Ovary (tissue), 10 donors: ENCODE measurements at regions of chr16 and their contacts with region 1.

Region 1: DNA sequence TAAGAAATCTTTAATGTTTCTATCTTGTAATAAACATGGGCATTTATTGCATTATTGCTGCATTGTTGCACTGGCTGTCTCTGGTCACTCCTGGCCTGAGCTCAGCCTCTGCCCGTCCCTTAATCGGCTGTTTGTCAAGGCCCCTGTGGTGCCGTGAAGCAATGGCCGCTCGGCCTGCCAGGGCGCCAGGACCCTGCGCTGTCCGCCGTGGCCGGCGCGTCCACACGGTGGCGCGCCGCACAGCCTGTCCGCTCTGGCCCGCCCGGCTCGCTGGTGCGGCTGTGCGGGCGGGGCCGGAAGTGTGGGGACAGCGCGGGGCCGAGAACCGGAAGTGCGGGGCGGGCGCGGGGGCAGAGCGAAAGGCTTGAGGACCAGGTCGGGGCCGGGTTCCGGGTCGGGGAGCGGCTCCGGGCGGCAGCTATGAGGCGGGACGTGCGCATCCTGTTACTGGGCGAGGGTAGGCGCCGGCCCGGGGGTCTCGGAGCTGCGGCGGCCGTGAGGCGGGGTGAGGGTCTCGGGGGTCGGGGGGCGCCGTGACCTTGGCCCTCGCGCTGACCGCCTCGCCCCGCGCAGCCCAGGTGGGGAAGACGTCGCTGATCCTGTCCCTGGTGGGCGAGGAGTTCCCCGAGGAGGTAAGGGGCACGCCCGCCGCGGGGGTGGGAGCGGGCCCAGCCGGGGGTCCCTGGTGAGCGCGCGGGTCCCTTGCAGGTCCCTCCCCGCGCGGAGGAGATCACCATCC is at the start of gene RHOT2:
- DNase-seq: peak; percentile 91 to 96 (median 94)
- H3K4me3 ChIP-seq: peak within 1 kb of the TSS; percentile 74
- H3K27ac ChIP-seq: peak within 1 kb of the TSS; percentile 58 to 67
- H3K4me1 ChIP-seq: peaks cover 12% of the 10 kb centered on the region
- H3K27me3 ChIP-seq: no peaks in the 10 kb centered on the region
- CTCF ChIP-seq: peak; percentile 93 to 97 (median 97)
- EP300 ChIP-seq: no peak
- POLR2A ChIP-seq: peak; percentile 60
- total RNA-seq, gene RHOT2: 44.6 to 100 (median 80.6) TPM

Region 2: DNA sequence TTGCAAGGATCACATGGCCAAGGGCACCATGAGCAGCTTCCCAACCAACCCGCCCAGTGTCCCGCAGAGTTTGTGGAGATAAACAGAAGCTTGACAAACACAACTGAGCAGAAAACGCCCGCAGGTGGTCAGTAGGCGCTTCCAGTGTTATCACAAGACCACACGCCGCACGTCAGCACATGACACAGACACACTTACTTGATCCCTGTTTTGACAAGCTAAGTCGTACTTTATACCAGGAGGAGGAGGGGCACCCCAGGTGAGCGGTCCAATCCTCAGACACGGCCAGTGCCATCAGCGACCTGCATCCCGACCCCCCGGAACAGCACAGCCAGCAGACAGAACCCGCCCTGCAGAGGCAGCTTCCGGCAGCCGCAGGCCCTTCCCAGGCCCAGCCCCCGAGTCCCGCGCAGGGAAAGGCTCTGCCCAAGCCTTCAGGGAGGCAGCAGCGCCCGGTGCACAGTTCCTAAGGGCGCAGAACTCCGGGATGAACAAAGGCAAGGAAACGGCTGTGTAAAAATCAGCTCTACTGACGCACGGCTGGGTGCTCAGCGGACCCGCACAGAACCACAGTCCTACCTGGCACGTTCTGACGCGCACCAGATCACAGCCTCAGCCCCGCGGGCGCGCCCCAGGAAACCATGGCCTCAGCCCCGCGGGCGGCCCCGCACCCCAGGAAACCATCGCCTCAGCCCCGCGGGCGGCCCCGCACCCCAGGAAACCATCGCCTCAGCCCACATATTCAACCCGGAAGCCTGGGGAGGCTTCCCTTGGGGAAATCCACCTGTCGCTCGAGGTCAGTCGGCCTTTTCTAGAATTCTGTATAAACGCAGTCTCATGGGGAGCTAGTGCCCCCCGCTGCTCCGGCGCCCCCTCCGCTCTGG is 343.3 kb before region 1 on chr16:
- intact Hi-C with region 1: no loop called
- DNase-seq: no peak
- H3K4me3 ChIP-seq: no peak overlapping the region
- H3K27ac ChIP-seq: no peak overlapping the region
- H3K4me1 ChIP-seq: no peaks in the 10 kb centered on the region
- H3K27me3 ChIP-seq: no peaks in the 10 kb centered on the region
- CTCF ChIP-seq: no peak
- EP300 ChIP-seq: no peak
- POLR2A ChIP-seq: no peak

Region 3: DNA sequence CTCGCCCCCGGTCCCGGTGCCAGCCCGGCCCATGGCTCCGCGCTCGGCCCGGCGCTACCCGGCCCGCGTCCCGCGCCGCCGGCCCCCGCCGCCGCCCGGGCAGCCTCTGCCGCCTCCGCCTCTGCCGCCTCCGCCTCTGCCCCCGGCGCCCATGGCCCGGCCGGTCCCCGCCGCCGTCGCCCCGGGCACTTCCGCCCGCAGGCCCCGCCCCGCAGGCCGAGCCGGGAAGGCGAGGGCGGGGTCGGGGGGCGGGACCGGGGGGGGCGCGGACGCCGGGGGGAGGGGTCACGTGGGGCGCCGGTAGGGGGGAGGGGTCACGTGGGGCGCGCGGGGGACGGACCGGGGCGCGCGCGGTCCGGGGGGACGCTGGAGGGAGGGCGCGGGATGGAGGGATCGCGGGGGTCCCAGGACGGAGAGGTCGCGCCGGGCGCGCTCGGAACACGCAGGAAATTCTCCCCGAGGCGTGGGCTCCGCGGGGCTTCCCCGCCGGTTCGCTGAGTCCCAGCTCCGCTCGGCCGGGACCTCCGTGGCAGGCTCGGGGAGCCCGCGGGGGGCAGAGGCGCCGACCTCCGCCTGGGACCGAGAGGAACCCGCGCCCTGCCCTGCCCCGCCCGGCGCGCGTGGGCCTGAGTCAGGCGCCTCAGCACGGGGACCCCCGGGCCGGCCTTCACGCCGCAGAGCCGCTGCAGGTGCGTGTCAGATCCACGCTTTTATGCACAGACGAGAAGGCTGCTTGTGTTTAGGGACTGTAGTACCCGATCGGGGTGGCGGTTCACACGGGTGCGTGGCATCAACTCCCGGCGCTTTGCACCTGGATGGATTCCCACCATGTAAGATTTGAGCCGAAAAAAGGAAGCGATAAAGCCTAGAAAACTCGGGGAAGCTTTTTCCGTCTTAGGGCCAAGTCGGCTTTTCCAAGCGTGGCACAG is 285.9 kb before region 1 on chr16 and contains the start of gene PGAP6:
- intact Hi-C with region 1: loop called in 1 of 4 experiments (anchors 10 kb)
- DNase-seq: peak; percentile 56 to 75 (median 70)
- H3K4me3 ChIP-seq: peak within 1 kb of the TSS; percentile 63
- H3K27ac ChIP-seq: peak within 1 kb of the TSS; percentile 30 to 33
- H3K4me1 ChIP-seq: peaks cover 4% of the 10 kb centered on the region
- H3K27me3 ChIP-seq: no peaks in the 10 kb centered on the region
- CTCF ChIP-seq: no peak
- EP300 ChIP-seq: no peak
- POLR2A ChIP-seq: no peak
- total RNA-seq, gene PGAP6: 13.0 to 39.8 (median 23.2) TPM

Region 4: GRCh38 chr16:546909-547770 is 120.8 kb before region 1 on chr16:
- intact Hi-C with region 1: loop called in 2 of 4 experiments (anchors 10 kb)
- DNase-seq: peak; percentile 88 to 95 (median 91)
- H3K4me3 ChIP-seq: peak overlapping the region; percentile 12
- H3K27ac ChIP-seq: no peak overlapping the region
- H3K4me1 ChIP-seq: peaks cover 3% of the 10 kb centered on the region
- H3K27me3 ChIP-seq: no peaks in the 10 kb centered on the region
- CTCF ChIP-seq: peak; percentile 54 to 80 (median 79)
- EP300 ChIP-seq: no peak
- POLR2A ChIP-seq: no peak

Region 5: DNA sequence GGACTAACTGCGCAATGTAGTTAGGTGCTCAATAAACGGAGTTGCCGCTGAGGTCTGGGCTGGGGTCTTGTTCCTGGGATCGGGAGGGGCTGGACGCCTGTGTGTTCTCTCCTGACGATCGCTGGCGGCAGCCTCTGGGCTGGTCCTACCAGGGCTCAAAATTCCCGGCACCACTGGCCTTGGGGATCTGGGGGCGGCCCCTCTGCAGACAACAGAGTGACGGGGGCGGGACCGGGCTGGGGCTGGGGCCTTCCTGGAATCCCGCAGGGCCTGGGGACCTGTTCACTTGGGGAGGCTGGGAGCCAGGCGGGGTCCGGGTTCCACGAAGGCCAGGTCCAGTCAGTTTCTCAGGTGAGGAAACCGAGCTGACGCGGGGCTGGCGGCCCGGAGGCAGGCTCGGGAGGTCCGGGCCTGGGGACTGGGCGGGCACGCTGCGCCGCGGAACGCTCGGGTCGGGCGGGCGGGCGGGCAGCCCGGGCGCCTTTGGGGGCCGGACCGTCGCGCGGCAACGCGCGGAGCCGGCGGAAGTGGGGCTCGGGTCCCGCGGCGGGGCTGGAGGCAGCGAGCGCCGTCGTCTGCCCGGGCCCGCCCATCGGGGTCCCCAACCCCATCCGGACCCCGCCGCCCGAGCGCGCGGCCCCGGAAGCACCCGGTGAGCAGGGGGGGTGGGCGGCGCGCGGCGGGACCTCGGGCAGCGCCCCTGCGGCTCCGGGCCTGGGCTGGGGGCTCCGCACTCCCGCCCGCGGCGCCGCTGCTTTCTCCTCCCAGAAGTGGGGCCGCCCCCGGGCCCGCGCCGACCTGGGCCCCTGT is 98.3 kb before region 1 on chr16 and contains the start of gene PIGQ:
- intact Hi-C with region 1: loop called in 1 of 4 experiments (anchors 5 kb)
- DNase-seq: peak; percentile 80 to 87 (median 83)
- H3K4me3 ChIP-seq: peak within 1 kb of the TSS; percentile 61
- H3K27ac ChIP-seq: peak within 1 kb of the TSS; percentile 62 to 89
- H3K4me1 ChIP-seq: peaks cover 42% of the 10 kb centered on the region
- H3K27me3 ChIP-seq: no peaks in the 10 kb centered on the region
- CTCF ChIP-seq: no peak
- EP300 ChIP-seq: no peak
- POLR2A ChIP-seq: no peak
- total RNA-seq, gene PIGQ: 24.1 to 47.7 (median 39.8) TPM

Region 6: GRCh38 chr16:886084-886543 is 218.2 kb after region 1 on chr16:
- intact Hi-C with region 1: no loop called
- DNase-seq: peak in 1 of 5 donors; percentile 13
- H3K4me3 ChIP-seq: no peak overlapping the region
- H3K27ac ChIP-seq: no peak overlapping the region
- H3K4me1 ChIP-seq: no peaks in the 10 kb centered on the region
- H3K27me3 ChIP-seq: no peaks in the 10 kb centered on the region
- CTCF ChIP-seq: no peak
- EP300 ChIP-seq: no peak
- POLR2A ChIP-seq: no peak